OCI-LY7 (cell line): ENCODE measurements at regions of chr21 and their contacts with region 1.

Region 1: DNA sequence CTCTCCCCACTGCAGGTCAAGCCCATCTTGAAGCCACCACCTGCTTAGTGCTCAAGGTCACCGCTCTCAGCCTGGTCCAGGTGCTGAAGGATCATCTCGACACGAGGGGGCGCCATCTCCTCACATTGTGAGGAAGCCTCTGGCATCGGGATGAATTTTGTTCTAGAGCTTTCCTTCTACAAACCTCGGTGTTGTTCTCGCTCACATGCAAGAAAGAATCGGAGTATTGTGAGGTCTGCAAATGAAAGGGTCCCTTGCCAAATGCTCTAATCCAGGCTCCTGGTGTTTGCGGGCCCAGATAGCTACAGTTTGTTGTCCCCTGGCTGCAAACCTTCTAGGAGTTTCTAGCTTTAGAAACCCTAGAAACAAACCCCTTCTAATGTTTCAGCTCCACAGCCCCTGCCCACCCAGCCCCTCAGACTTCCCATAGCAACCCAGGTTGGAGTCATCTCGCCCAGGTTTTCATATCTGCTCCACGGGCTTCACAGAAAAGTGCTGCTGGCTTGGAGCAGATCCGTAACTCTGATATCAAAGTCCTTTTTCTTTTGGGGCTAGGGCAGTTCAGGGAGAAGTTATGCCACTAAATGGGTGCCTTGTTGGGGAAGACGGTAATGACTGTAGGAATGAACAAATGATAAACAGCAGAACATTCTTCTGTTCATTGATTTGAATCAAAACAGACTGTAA is 8.6 kb upstream of the ATP5PO start:
- DNase-seq: peak; percentile 91
- H3K4me3 ChIP-seq: no peak overlapping the region
- H3K27ac ChIP-seq: no peak overlapping the region
- H3K4me1 ChIP-seq: peaks cover 15% of the 10 kb centered on the region
- CTCF ChIP-seq: peak; percentile 97

Region 2: DNA sequence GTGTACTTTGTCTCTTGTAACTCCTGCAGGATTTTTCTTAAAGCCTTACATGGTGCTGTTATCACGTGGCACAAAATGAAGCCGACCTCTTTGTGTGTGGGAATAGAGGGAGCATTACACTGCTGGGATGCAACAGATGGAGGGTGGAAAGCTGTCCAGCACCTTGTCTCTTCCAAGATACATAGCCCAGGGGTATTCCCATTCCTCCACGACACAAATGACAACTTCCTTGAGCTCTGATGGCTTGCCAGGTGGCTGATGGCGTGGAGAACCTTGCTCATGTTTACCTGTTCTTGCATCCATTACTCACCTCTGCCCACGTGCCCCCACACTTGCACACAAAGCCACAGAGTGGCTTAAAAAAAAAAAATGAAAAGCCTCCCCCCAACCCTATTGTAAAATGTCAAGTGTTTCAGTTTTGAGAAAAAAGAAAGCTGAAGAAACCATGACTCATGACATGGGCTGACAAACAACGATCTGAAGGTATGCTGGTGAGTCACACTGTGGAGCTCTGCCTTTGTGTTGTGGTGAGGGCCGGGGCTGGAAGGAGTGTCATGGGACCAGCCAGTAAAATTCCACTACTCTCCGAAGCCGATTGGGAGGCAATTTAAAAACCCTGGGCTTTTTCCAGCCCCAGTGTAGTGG is 23.4 kb after region 1 on chr21:
- CTCF ChIA-PET with region 1: interaction called, 11 read pairs
- POLR2A ChIA-PET with region 1: interaction called, 3 read pairs
- intact Hi-C with region 1: no loop called
- DNase-seq: peak; percentile 30
- H3K4me3 ChIP-seq: peak overlapping the region; percentile 21
- H3K27ac ChIP-seq: peak overlapping the region; percentile 66
- H3K4me1 ChIP-seq: peaks cover 41% of the 10 kb centered on the region
- CTCF ChIP-seq: no peak; the same call in 1 of the 2 replicates

Region 3: DNA sequence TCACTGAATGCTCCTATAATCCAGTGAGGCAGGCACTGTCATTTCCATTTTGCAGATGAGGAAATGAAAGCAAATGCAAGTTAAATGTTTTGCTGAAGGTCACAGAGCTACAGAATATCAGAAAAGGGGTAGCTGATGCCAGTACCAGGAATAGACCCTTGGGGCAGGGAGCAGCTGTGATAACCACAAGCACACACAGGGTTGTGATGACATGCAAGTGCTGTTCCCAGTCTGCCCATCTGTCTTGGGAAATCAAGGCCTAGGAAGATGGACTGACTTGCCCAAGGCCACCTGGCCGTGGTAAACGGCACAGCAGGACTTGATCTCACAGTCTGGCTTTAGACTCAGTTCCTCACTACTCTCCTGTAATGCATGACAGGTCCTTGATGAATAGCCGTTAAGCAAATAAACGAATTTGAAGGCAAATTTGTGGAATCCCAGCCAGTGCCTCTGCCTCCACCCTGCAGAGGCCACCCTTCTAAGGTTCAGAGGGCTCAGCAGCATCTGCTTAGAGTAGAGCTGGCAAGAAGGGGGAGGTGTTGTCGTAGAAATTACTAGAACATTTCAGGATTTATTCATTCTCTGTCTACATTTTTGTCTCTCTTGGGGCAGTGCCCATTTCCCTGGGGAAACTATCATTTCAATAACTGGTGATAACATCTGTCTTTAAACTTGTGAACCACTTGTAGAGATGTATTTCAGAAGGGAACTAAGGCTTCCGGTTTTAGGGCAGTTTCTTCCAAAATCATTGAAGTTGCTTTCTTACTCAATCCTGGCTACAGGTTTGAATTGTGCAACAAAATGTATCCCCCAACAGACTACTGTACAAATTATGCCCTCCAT is 96.0 kb after region 1 on chr21:
- CTCF ChIA-PET with region 1: interaction called, 3 read pairs
- POLR2A ChIA-PET with region 1: no interaction called
- intact Hi-C with region 1: loop called (anchors 2 kb)
- DNase-seq: peak; percentile 95
- H3K4me3 ChIP-seq: peak overlapping the region; percentile 42
- H3K27ac ChIP-seq: peak overlapping the region; percentile 98
- H3K4me1 ChIP-seq: peaks cover 69% of the 10 kb centered on the region
- CTCF ChIP-seq: peak; percentile 68

Region 4: DNA sequence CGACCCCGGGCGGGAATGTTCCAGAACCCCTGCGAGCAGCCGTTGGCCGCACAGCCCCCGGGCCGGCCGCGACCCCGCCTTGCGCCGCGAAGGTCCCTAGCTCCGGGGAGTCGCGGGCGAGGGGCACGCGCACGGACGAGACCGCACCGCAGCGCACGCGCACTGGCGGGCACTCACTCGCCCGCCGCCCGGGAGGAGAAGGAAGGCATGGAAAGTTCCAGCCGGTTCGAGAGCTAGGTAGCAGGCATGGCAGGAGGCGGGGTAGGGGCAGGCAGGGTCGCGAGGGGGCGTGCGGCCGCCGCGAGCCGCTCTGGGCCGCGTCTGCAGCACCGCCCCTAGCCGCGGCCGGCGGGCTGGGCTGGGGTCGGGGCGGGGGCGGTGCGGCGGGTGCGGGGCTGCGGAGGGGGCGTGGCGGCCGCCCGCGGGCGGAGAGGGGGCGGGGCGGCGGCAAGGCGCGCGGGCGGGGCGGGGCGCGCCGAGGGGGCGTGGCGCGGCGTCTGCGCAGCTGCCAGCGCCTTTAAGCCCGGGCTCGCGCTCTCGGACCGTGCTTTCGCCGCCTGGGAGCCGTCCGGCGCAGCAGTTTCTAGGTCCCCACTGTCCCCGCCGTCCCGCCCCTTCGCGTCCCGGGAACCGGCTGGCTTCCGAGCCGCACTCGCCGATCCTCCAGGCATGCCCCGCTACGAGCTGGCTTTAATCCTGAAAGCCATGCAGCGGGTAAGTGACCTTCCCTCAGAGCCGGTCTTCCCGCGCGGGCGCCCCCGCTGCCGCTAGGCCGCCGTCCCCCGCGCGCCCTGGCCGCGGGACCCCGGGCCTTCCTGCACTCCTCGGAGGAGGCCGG is 149.0 kb after region 1 on chr21 and contains the starts of genes MRPS6 and SLC5A3:
- CTCF ChIA-PET with region 1: no interaction called
- POLR2A ChIA-PET with region 1: no interaction called
- intact Hi-C with region 1: loop called (anchors 5 kb)
- DNase-seq: peak; percentile 90
- H3K4me3 ChIP-seq: peak within 1 kb of the TSS; percentile 90
- H3K27ac ChIP-seq: peak within 1 kb of the TSS; percentile 43
- H3K4me1 ChIP-seq: peaks cover 41% of the 10 kb centered on the region
- CTCF ChIP-seq: no peak
- total RNA-seq, gene MRPS6: 15.2 and 20.9 TPM in 2 replicates
- total RNA-seq, gene SLC5A3: 26.3 and 31.5 TPM in 2 replicates

Region 5: GRCh38 chr21:34243562-34243961 is 319.3 kb after region 1 on chr21:
- CTCF ChIA-PET with region 1: no interaction called
- POLR2A ChIA-PET with region 1: no interaction called
- intact Hi-C with region 1: loop called (anchors 2 kb)
- DNase-seq: peak; percentile 47
- H3K4me3 ChIP-seq: no peak overlapping the region
- H3K27ac ChIP-seq: no peak overlapping the region
- H3K4me1 ChIP-seq: no peaks in the 10 kb centered on the region
- CTCF ChIP-seq: peak; percentile 72

Region 6: GRCh38 chr21:34351786-34352241 is 427.6 kb after region 1 on chr21:
- CTCF ChIA-PET with region 1: interaction called, 10 read pairs
- POLR2A ChIA-PET with region 1: interaction called, 5 read pairs
- intact Hi-C with region 1: loop called (anchors 2 kb)
- DNase-seq: peak; percentile 76
- H3K4me3 ChIP-seq: no peak overlapping the region
- H3K27ac ChIP-seq: no peak overlapping the region
- H3K4me1 ChIP-seq: no peaks in the 10 kb centered on the region
- CTCF ChIP-seq: peak; percentile 83

Region 7: GRCh38 chr21:34360488-34361241 is 436.4 kb after region 1 on chr21:
- CTCF ChIA-PET with region 1: interaction called, 3 read pairs
- POLR2A ChIA-PET with region 1: no interaction called
- intact Hi-C with region 1: loop called (anchors 1 kb)
- DNase-seq: peak; percentile 50
- H3K4me3 ChIP-seq: no peak overlapping the region
- H3K27ac ChIP-seq: no peak overlapping the region
- H3K4me1 ChIP-seq: peaks cover 4% of the 10 kb centered on the region
- CTCF ChIP-seq: peak; percentile 68